ENCODE measurements at regions of chr18 and their contacts with region 1.

Region 1: DNA sequence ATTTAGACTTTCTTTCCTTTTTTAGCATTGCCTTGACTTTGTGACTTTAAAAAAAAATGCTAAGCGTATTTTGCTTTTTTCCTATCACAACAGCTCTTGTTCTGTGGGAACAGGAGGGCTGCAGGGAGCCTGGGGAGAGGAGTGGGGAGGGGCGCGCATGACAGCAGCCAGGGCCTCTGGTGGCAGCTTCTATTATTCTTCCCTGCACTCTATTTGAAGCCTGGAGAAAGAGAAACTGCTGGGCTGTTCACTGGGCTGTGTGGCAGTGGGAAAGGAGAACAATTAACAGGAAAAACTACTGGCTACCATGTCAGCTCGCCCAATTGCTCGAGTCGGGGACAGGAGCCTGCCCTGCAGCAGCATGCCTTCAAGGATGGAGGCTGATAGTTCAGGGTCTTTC is 119.0 kb upstream of the ZBTB14 start:
- DNase-seq: no peak
- ATAC-seq: no peak

Region 2: DNA sequence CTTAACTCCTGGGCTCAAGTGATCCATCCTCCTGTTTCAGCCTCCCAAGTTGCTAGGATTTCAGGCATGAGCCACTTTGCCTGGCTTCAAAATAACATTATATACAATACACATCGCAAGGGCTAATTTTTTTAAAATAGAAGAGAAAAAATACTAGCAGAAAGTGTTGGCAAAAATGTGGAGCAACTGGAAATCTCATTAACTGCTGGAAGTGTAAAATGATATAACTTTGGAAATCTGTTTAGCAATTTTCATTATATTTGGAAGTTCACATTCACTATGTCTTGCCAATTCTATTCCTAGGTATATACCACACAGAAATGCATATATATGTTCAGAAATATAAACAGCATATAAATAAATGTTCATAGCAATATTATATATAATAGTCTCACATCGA is 63.9 kb before region 1 on chr18:
- intact Hi-C with region 1: loop called (anchors 10 kb)
- DNase-seq: no peak
- ATAC-seq: no peak

Measured in Right ventricle myocardium inferior (tissue), 1 donor.